ENCODE measurements at regions of chr17 and their contacts with region 1.

Region 1: GRCh38 chr17:14300575-14301278 is at the start of gene HS3ST3B1:
- DNase-seq: peak; percentile 43 to 92 (median 78)

Region 2: GRCh38 chr17:13594762-13595598 is 705.7 kb before region 1 on chr17:
- intact Hi-C with region 1: loop called (anchors 5 kb)
- DNase-seq: peak; percentile 57 to 91 (median 80)

Region 3: GRCh38 chr17:14165616-14166015 is 135.1 kb before region 1 on chr17:
- intact Hi-C with region 1: no loop called
- DNase-seq: no peak

Measured in head of caudate nucleus (tissue), 42 donors.